ENCODE measurements at regions of chr15 and their contacts with region 1.

Region 1: GRCh38 chr15:95304151-95304946 is 1026.2 kb upstream of the NR2F2 start:
- DNase-seq: no peak
- H3K4me3 ChIP-seq: no peak overlapping the region
- H3K27ac ChIP-seq: no peak overlapping the region
- H3K4me1 ChIP-seq: no peaks in the 10 kb centered on the region
- H3K27me3 ChIP-seq: peaks cover 2% of the 10 kb centered on the region
- CTCF ChIP-seq: no peak

Region 2: DNA sequence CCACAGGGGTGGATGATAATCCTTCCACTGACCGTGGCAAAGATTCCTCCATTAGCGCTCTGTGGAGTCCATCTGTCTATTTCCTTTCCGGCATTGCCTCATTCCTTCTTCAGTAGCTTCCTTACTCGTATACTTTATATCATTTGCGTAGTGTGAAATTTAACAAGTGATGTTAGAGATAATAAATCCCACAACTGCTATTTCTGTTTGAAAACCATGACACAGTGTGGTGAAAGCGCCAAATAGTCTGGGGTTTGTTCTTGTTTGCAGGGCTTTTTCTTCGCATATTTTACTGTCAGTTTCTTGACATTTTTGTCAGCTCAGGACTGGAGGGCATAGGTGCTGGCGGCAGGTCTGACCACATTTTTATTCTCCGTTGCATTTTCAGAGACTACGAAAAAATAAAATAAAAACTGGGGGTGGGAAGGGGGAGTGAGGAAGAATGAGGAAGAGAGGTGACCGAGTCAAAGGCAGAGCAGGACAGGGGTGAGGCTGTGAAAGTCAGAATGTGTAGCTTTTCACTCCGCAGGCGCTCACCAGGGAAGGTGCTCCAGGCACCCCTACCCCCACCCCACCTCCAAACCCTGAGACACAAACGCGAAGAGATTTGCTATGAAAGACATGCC is 108.1 kb before region 1 on chr15:
- CTCF ChIA-PET with region 1: interaction called, 12 read pairs
- dilution Hi-C with region 1: no loop called
- in situ Hi-C with region 1: no loop called
- intact Hi-C with region 1: no loop called
- DNase-seq: no peak
- H3K4me3 ChIP-seq: peak overlapping the region; percentile 12 to 42 (median 34)
- H3K27ac ChIP-seq: no peak overlapping the region
- H3K4me1 ChIP-seq: peaks cover 4% of the 10 kb centered on the region
- H3K27me3 ChIP-seq: no peaks in the 10 kb centered on the region
- CTCF ChIP-seq: no peak

Region 3: GRCh38 chr15:95226850-95227634 is 77.3 kb before region 1 on chr15:
- CTCF ChIA-PET with region 1: no interaction called
- dilution Hi-C with region 1: no loop called
- in situ Hi-C with region 1: no loop called
- intact Hi-C with region 1: no loop called
- DNase-seq: peak; percentile 94
- H3K4me3 ChIP-seq: peak overlapping the region in 1 of 3 experiments; percentile 15
- H3K27ac ChIP-seq: peak overlapping the region; percentile 95
- H3K4me1 ChIP-seq: peaks cover 24% of the 10 kb centered on the region
- H3K27me3 ChIP-seq: no peaks in the 10 kb centered on the region
- CTCF ChIP-seq: no peak

Region 4: GRCh38 chr15:95770191-95770590 is 465.8 kb after region 1 on chr15:
- CTCF ChIA-PET with region 1: interaction called, 22 read pairs
- dilution Hi-C with region 1: no loop called
- in situ Hi-C with region 1: no loop called
- intact Hi-C with region 1: no loop called
- DNase-seq: peak; percentile 56
- H3K4me3 ChIP-seq: no peak overlapping the region
- H3K27ac ChIP-seq: peak overlapping the region; percentile 32
- H3K4me1 ChIP-seq: peaks cover 5% of the 10 kb centered on the region
- H3K27me3 ChIP-seq: no peaks in the 10 kb centered on the region
- CTCF ChIP-seq: no peak